ENCODE measurements at regions of chr13 and their contacts with region 1.

Region 1: DNA sequence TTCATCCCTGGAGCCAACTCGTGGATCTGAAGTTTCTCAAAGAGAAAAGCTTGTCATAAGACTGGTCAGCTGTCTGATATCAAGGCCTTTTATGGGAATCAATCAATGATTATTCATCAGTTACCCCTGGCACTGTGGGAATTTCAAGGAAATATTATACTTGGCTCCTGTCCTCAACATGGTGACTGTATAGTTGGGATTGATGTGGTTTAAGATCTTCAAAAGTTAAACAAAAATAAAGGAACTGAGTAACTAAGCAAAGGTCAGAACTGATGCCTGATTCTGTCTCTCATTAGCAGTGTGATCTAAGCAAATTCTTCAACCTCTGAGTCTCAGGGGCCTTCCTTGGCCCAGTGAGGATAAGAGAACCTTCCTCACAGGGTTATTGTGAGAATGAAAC is 22.2 kb upstream of the SERPINE3 start:
- DNase-seq: peak; percentile 42
- H3K4me3 ChIP-seq: no peak overlapping the region
- H3K27ac ChIP-seq: no peak overlapping the region
- H3K4me1 ChIP-seq: peaks cover 13% of the 10 kb centered on the region
- H3K27me3 ChIP-seq: no peaks in the 10 kb centered on the region
- CTCF ChIP-seq: no peak
- POLR2A ChIP-seq: no peak

Region 2: DNA sequence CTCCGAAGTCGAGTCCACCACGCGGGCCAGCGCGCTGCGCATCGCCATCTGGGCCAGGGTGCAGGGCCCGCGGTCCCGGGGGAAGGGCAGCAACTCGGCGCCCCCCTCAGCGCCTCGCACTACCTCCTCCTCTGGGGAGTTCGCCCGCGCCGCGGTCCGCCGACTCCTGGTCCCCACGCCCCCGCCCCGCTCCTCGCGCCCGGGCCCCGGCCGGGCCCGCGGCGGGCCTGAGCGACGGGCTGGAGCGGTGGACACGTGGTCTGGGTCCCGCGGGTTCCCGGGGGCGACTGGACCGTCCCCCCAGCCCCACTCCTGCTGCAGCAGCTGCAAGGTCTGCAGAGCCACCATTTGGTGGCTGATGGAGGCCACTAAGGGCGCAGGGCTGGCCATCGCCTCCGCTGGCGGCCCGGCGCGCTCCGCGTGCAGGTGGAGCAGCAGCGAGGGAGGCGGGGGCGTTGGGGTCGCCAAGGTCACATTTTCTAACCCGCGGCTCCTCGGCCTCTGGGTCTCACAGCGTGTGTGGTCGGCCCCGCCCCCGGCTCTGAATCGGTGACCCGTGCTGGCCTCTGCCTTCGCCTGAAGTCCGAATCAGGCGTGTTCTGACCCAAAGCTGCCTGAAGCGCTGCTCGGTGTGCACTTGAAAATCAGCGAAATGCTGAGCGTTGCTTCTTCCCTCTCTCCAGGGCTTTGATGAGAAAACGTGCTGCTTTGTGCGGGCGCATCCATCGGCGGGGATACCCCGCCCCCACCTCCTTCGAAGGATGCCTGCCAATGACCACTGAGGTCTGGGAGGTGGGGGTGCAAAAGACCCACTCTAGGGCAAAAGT is 473.8 kb before region 1 on chr13 and contains the start of gene DLEU7:
- CTCF ChIA-PET with region 1: no interaction called
- POLR2A ChIA-PET with region 1: no interaction called
- dilution Hi-C with region 1: no loop called
- intact Hi-C with region 1: no loop called
- DNase-seq: no peak
- H3K4me3 ChIP-seq: no peak within 1 kb of the TSS
- H3K27ac ChIP-seq: no peak within 1 kb of the TSS
- H3K4me1 ChIP-seq: no peaks in the 10 kb centered on the region
- H3K27me3 ChIP-seq: peaks cover 26 to 36% of the 10 kb centered on the region in 2 experiments
- CTCF ChIP-seq: no peak
- POLR2A ChIP-seq: no peak
- total RNA-seq, gene DLEU7: not detected in 2 replicates

Region 3: GRCh38 chr13:51025245-51025905 is 291.9 kb before region 1 on chr13:
- CTCF ChIA-PET with region 1: no interaction called
- POLR2A ChIA-PET with region 1: no interaction called
- dilution Hi-C with region 1: no loop called
- intact Hi-C with region 1: no loop called
- DNase-seq: no peak
- H3K4me3 ChIP-seq: no peak overlapping the region
- H3K27ac ChIP-seq: no peak overlapping the region
- H3K4me1 ChIP-seq: no peaks in the 10 kb centered on the region
- H3K27me3 ChIP-seq: no peaks in the 10 kb centered on the region
- CTCF ChIP-seq: no peak
- POLR2A ChIP-seq: no peak

Region 4: DNA sequence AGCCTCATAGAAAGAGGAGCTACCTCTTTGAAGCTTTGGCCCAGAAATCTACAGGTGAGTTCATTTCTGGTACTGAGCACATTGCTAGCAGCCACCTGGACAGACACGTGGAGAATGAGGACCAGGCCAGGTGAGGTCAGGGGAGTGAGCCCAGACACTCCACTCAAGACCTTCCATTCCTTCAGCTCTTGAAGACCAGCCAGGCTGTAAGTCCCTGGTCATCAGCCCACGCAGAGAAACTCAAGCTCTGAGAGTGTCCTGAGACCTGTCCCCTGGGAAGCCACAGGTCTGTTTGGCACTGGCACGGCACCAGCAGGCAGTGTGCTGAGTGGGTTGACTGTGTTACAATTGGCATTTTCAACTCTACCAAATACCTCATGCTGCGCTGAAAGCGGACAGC is 233.6 kb before region 1 on chr13:
- CTCF ChIA-PET with region 1: no interaction called
- POLR2A ChIA-PET with region 1: no interaction called
- dilution Hi-C with region 1: no loop called
- intact Hi-C with region 1: no loop called
- DNase-seq: no peak
- H3K4me3 ChIP-seq: no peak overlapping the region
- H3K27ac ChIP-seq: no peak overlapping the region
- H3K4me1 ChIP-seq: no peaks in the 10 kb centered on the region
- H3K27me3 ChIP-seq: peaks cover 3 to 4% of the 10 kb centered on the region in 2 experiments
- CTCF ChIP-seq: no peak
- POLR2A ChIP-seq: no peak

Region 5: DNA sequence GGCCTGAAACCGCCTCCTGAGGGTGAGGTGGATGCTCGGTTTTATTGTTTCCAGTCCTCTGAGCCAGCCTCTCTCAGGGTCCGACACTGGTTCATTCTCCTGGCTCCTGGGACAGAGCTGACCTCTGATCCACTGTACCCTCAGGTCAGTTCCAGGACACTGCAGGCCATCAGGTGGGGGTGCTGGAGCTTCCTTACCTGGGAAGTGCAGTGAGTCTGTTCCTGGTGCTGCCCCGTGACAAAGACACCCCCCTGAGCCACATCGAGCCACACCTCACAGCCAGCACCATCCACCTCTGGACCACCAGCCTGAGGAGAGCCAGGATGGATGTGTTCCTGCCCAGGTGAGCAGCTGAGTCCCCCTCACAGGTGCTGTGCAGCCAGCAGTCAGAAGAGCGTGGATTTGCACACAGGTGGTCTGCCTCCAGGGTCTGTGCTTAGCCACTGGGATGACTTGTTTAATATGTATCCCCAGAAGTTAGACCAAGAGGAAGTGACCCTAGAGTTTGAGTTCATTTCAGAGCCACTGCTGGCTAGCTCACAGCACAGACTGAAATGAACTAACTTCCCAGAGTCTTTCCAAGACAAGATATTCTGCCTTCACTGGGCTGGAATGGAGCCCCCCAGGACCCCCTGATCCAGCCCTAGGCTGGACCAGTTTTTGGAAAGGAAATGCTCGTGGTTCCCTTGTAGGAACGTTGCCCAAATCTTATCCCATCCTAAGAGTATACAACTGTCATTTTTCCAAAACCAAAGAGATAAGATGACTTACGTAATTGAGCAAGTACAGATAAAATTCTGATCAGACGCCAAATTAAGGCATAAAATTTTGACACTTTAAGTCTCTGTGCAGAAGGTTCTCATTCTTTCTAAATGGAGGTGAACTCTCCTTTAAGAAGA is 31.1 kb after region 1 on chr13:
- CTCF ChIA-PET with region 1: no interaction called
- POLR2A ChIA-PET with region 1: no interaction called
- dilution Hi-C with region 1: no loop called
- intact Hi-C with region 1: loop called (anchors 5 kb)
- DNase-seq: no peak
- H3K4me3 ChIP-seq: no peak overlapping the region
- H3K27ac ChIP-seq: no peak overlapping the region
- H3K4me1 ChIP-seq: no peaks in the 10 kb centered on the region
- H3K27me3 ChIP-seq: no peaks in the 10 kb centered on the region
- CTCF ChIP-seq: no peak
- POLR2A ChIP-seq: no peak

Region 6: DNA sequence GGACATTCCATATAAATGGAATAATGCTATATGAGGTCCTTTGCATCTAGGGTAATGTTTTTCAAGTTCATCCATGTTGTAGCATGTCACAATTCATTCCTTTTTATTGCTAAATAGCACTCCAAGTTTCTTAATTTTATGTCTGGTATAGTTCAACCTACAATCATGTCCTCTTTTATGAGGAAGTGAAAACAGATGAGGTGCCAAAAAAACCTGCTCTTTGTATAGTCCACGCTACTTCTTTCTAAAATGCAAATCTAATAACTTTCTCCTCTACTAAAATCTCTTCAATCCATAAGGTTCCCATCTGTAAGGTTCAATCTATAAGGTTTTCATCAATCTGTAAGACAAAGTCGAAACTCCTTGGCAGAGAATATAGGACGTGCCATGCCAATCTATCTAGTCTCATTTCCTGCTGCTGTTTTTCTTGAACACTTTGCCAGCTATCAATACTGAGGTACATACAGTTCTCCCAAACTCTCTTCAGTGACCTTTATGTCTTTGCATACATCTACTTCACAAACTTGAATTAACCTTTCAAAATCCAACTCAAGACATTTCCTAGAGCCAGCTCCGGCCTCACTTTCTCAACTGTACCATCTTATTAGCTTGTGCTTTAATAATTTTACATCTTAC is 101.9 kb after region 1 on chr13:
- CTCF ChIA-PET with region 1: no interaction called
- POLR2A ChIA-PET with region 1: no interaction called
- dilution Hi-C with region 1: no loop called
- intact Hi-C with region 1: loop called (anchors 10 kb)
- DNase-seq: no peak
- H3K4me3 ChIP-seq: no peak overlapping the region
- H3K27ac ChIP-seq: no peak overlapping the region
- H3K4me1 ChIP-seq: peaks cover 12% of the 10 kb centered on the region
- H3K27me3 ChIP-seq: no peaks in the 10 kb centered on the region
- CTCF ChIP-seq: no peak
- POLR2A ChIP-seq: no peak

Measured in endothelial cell of umbilical vein (primary cell).